A549 (cell line): ENCODE measurements at regions of chr12 and their contacts with region 1.

Region 1: GRCh38 chr12:131137836-131138637 is 184.3 kb downstream of the ADGRD1 start:
- DNase-seq: peak; percentile 68 to 73
- ATAC-seq: peak; percentile 81 to 91
- H3K4me3 ChIP-seq: no peak overlapping the region
- H3K27ac ChIP-seq: peak overlapping the region; percentile 60 to 64; a peak in 4 of 6 replicates
- H3K4me1 ChIP-seq: peaks cover 24% of the 10 kb centered on the region
- CTCF ChIP-seq: peak; percentile 47
- EP300 ChIP-seq: no peak
- POLR2A ChIP-seq: no peak
- RAD21 ChIP-seq: peak; percentile 76 to 85

Region 2: DNA sequence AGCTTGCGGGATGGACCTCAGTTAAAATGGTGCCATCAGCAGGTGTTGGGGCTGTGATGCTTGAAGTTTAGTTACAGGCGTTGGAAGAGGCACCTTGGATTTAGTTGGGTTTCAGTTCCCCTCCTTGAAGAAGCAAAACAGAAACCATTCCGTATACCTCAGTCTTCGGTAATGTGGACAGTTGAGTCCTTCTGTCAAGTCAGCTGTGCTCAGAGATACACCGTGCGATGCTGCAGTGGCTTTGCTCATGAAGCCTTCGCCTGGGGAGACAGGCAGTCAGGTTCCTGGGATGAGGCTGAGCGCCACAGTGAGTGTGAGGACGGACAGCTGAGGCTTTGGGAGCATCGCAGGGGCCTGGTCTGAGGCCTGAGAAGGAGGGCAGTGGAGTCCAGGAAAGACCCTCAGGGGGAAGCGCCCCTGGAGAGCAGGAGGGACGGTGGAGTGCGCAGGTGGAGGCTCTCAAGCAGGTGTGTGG is 258.8 kb before region 1 on chr12:
- CTCF ChIA-PET with region 1: no interaction called
- POLR2A ChIA-PET with region 1: no interaction called
- DNase-seq: no peak
- ATAC-seq: peak; percentile 26 to 49
- H3K4me3 ChIP-seq: no peak overlapping the region
- H3K27ac ChIP-seq: no peak overlapping the region
- H3K4me1 ChIP-seq: peaks cover 11% of the 10 kb centered on the region
- CTCF ChIP-seq: no peak
- EP300 ChIP-seq: no peak
- POLR2A ChIP-seq: no peak
- RAD21 ChIP-seq: no peak

Region 3: DNA sequence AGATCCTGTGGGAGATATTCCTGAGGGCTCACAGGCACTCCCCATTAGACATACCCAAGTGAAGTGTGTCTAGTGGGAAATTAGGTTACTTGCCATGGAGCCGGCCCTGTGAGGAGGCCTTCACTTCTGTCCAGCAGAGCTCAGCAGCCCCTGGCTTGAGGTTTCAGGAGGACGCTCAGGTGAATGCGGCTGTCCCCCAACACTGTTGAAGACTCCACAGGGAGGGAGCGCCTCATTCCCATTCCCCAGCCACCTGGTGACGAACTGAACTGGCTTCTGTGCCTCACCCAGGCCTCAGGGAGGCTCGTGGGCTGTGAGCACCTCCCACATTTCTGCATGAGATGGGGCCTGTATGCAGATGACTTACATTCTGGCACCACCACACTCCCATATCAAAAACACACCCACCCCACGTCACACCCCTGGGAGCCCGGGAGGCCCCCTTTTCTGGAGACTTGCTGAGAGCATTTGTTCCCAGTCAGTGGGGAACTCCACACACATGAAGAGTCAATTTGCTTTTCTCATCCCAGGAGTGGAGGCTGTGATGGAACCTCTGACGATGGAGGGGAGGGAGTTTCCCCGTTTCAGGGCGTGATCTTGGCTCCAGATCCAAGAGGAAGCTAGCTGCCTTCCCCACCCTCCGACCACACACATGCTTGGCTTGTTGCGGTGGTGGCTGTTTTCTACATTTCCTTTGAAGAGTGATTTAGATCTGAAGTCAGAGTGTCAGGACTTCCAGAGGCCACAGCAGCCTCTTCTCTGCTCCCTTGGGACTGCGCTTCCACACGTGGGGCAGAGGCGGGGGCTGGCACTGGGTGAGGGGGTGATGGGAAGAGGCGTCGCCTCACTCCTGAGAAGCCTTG is 63.6 kb before region 1 on chr12:
- CTCF ChIA-PET with region 1: no interaction called
- POLR2A ChIA-PET with region 1: no interaction called
- DNase-seq: no peak
- ATAC-seq: no peak
- H3K4me3 ChIP-seq: no peak overlapping the region
- H3K27ac ChIP-seq: no peak overlapping the region
- H3K4me1 ChIP-seq: no peaks in the 10 kb centered on the region
- CTCF ChIP-seq: no peak
- EP300 ChIP-seq: no peak
- POLR2A ChIP-seq: no peak
- RAD21 ChIP-seq: no peak

Region 4: DNA sequence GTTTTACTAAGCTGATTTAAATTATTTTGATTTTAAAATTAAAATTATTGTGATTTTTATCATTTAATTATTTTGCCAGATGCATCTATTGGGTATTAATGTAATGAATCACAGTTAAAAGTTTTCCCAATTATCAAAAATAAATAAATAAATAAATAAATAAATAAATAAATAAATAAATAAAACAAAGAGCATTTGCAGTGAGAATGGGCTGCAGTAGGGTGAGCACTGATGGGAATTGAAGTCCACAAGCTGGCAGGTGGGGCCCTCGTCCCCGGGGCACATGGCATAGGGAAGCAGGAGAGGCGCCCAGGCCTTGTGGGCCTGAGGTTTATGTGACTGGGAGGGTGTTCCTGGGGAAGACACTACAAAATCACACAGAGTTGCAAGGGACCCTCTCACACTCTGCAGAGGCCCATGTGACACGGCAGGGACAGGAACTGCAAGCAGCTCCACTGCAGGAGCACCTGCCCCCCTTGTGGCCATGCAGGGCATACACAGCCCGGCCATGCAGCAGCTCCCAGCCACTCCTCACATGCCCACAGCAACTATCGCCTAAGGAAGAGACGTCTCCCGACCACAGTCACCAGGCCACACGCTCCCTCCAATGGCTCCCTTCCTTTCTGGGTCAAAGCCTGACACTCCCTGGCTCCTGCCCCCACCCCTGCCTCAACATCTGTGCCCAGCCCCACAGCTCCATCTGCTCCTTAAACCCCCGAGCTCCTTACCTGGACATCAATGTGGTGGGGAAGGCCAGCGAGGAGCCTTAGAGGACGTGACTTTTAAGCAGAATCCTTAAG is 316.6 kb after region 1 on chr12:
- CTCF ChIA-PET with region 1: interaction called, 12 read pairs
- POLR2A ChIA-PET with region 1: no interaction called
- DNase-seq: peak; percentile 84 to 87
- ATAC-seq: peak; percentile 97 to 100
- H3K4me3 ChIP-seq: no peak overlapping the region
- H3K27ac ChIP-seq: peak overlapping the region in 1 of 2 experiments; percentile 56; a peak in 3 of 6 replicates
- H3K4me1 ChIP-seq: no peaks in the 10 kb centered on the region
- CTCF ChIP-seq: peak; percentile 64
- EP300 ChIP-seq: no peak
- POLR2A ChIP-seq: no peak
- RAD21 ChIP-seq: peak; percentile 81 to 88

Region 5: DNA sequence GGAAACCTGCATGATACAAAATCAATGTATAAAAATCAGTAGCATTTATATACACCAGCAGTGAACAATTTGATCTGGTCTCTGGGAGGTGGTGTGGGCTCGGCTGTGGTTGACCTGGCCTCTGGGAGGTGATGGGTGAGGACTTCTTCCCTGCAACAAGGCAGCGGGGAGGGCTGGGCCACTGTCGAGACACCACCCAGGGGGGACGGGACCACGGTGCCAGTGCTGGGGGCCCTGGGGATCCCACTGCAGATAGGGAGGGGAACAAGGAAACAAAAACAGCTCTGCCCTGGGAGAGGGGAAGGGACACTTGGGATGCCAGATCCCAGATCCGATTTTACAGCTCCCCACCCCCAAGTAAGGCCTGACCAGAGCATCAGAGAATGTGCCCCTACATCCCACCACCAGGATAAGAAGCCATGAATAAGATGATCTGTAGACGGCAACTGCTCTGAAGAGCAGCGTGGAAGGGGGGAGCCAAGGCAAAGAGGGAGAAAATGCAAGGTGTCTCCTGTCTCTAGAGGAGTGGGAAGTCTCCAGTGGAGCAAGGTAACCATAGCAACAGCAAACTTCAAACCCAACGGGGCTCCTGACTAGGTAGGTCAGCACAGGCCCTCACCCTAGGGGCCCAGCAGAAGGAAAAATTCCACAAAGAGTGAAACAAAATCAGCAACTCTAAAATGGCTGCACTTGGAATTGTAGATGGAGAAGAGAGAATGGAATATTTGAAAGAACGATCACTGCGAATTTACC is 383.5 kb after region 1 on chr12:
- CTCF ChIA-PET with region 1: no interaction called
- POLR2A ChIA-PET with region 1: no interaction called
- DNase-seq: no peak
- ATAC-seq: peak in 1 of 2 experiments; percentile 30; a peak in 1 of 6 replicates
- H3K4me3 ChIP-seq: no peak overlapping the region
- H3K27ac ChIP-seq: no peak overlapping the region
- H3K4me1 ChIP-seq: no peaks in the 10 kb centered on the region
- CTCF ChIP-seq: no peak
- EP300 ChIP-seq: no peak
- POLR2A ChIP-seq: no peak
- RAD21 ChIP-seq: no peak